ENCODE measurements at regions of chr7 and their contacts with region 1.

Region 1: GRCh38 chr7:150420987-150421674 is 29.3 kb upstream of the GIMAP8 start:
- DNase-seq: peak; percentile 88
- ATAC-seq: peak; percentile 96

Region 2: GRCh38 chr7:150356265-150356897 is 64.8 kb before region 1 on chr7:
- intact Hi-C with region 1: loop called (anchors 5 kb)
- DNase-seq: no peak
- ATAC-seq: no peak

Region 3: GRCh38 chr7:150388709-150389531 is 32.2 kb before region 1 on chr7:
- intact Hi-C with region 1: no loop called
- DNase-seq: peak; percentile 88
- ATAC-seq: peak; percentile 96

Region 4: DNA sequence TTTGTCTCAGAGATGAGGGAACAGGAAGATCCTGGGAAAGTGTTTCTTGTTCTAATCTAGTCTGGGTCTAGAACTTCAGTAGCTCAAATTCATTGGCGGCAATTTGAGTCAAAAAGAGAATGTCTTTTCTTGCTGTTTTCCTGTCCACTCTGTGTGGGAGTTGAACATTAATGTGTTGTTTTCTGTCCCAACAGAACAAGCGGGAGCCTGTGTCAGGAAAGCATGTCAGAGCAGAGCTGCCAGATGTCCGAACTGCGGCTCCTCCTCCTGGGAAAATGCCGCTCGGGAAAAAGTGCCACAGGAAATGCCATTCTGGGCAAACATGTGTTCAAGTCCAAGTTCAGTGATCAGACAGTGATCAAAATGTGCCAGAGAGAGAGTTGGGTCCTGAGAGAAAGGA is 45.3 kb after region 1 on chr7:
- intact Hi-C with region 1: no loop called
- DNase-seq: no peak
- ATAC-seq: no peak